Caco-2 (cell line): ENCODE measurements at regions of chr7 and their contacts with region 1.

Region 1: GRCh38 chr7:8295638-8296361 is 33.8 kb upstream of the ICA1 start:
- DNase-seq: peak; percentile 63 to 76
- H3K4me3 ChIP-seq: no peak overlapping the region
- H3K4me3 Mint-ChIP-seq: no peak overlapping the region
- H3K27ac Mint-ChIP-seq: no peak overlapping the region
- H3K4me1 ChIP-seq: peaks cover 11% of the 10 kb centered on the region
- H3K4me1 Mint-ChIP-seq: peaks cover 26% of the 10 kb centered on the region
- H3K27me3 ChIP-seq: no peaks in the 10 kb centered on the region
- H3K27me3 Mint-ChIP-seq: no peaks in the 10 kb centered on the region
- CTCF ChIP-seq: peak; percentile 74

Region 2: GRCh38 chr7:7424151-7424873 is 871.5 kb before region 1 on chr7:
- CTCF ChIA-PET with region 1: no interaction called
- POLR2A ChIA-PET with region 1: no interaction called
- intact Hi-C with region 1: loop called (anchors 2 kb)
- DNase-seq: peak; percentile 62 to 75
- H3K4me3 ChIP-seq: no peak overlapping the region
- H3K4me3 Mint-ChIP-seq: no peak overlapping the region
- H3K27ac Mint-ChIP-seq: no peak overlapping the region
- H3K4me1 ChIP-seq: no peaks in the 10 kb centered on the region
- H3K4me1 Mint-ChIP-seq: no peaks in the 10 kb centered on the region
- H3K27me3 ChIP-seq: no peaks in the 10 kb centered on the region
- H3K27me3 Mint-ChIP-seq: no peaks in the 10 kb centered on the region
- CTCF ChIP-seq: peak; percentile 86 to 93

Region 3: DNA sequence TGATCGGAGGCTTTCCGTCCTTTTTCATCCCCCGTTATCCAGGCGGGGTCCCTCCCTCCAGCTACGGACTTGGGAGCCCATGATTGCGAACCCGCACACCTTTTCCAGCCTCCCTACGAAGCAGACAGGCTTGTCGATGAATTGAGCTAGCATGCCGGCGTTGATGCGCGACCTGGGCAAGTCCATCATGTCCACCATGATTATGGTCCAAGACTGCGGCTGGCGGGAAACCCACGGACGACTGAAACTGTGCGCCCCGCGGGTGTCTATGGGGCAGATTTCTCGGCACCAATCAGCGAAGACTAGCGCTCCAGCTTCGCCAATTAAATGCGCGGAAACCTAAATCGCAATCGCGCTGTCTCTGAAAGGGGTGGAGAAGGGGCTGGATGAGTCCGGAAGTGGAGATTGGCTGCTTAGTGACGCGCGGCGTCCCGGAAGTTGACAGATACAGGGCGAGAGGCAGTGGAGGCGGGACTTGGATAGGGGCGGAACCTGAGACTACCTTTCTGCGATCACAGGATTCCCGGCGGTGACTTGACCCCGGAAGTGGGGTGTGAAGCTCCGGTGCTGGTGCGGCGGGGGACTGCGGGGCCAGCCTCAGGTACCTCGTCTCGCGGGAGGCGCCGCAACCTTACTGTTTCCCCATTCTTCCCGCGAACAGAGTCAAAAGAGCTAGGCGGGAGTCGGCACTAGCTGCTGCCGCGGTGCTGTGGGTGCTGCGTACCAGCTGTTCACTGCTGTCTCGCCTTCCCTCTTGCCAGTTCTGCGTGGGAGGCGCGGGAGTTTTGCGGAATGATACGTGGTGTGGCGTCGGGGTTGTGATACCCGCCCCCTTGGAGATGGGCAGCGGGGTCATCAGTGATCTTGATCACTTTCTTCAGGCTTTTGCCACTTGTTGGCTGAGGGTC is 655.3 kb before region 1 on chr7 and contains the start of gene UMAD1:
- CTCF ChIA-PET with region 1: interaction called, 4 read pairs
- POLR2A ChIA-PET with region 1: interaction called, 3 read pairs
- intact Hi-C with region 1: loop called (anchors 2 kb)
- DNase-seq: peak; percentile 99 to 100
- H3K4me3 ChIP-seq: peak within 1 kb of the TSS; percentile 98
- H3K4me3 Mint-ChIP-seq: peak within 1 kb of the TSS; percentile 88
- H3K27ac Mint-ChIP-seq: peak within 1 kb of the TSS; percentile 97
- H3K4me1 ChIP-seq: peaks cover 15% of the 10 kb centered on the region
- H3K4me1 Mint-ChIP-seq: peaks cover 24% of the 10 kb centered on the region
- H3K27me3 ChIP-seq: no peaks in the 10 kb centered on the region
- H3K27me3 Mint-ChIP-seq: no peaks in the 10 kb centered on the region
- CTCF ChIP-seq: no peak
- total RNA-seq, gene UMAD1: 20.0 and 20.3 TPM in 2 replicates

Region 4: DNA sequence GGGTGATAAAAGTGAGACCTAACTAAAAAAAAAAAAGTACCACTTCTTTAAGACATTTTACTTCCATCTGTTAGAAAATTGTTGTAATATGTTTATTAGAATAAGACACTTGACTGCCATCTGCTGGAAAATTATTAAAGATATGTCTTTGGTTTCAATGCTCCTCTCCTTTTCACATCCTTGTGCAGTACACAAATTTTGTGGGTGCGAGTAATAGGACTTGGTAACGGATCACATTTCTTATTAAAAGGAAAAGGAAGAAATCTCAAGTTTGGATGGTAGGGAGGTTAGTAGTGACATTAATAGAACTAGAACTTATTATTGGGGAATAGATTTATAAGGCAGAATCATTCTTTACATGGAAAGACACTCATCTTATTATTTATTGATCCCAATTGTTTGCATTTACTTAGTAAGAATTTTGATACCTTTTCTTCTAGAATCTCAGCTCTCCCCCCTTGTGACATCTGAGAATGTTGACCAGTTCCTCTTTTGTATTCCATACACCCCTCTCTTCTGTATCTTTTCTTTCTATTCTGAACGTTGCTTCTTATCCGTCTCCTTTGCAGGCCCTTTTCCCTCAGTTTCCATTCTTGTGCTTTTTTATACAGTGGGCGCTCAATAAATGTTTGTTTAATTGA is 534.3 kb before region 1 on chr7:
- CTCF ChIA-PET with region 1: no interaction called
- POLR2A ChIA-PET with region 1: no interaction called
- intact Hi-C with region 1: loop called (anchors 10 kb)
- DNase-seq: peak in 1 of 2 experiments; percentile 10
- H3K4me3 ChIP-seq: no peak overlapping the region
- H3K4me3 Mint-ChIP-seq: no peak overlapping the region
- H3K27ac Mint-ChIP-seq: no peak overlapping the region
- H3K4me1 ChIP-seq: peaks cover 33% of the 10 kb centered on the region
- H3K4me1 Mint-ChIP-seq: peaks cover 32% of the 10 kb centered on the region
- H3K27me3 ChIP-seq: no peaks in the 10 kb centered on the region
- H3K27me3 Mint-ChIP-seq: no peaks in the 10 kb centered on the region
- CTCF ChIP-seq: peak; percentile 6 to 35

Region 5: DNA sequence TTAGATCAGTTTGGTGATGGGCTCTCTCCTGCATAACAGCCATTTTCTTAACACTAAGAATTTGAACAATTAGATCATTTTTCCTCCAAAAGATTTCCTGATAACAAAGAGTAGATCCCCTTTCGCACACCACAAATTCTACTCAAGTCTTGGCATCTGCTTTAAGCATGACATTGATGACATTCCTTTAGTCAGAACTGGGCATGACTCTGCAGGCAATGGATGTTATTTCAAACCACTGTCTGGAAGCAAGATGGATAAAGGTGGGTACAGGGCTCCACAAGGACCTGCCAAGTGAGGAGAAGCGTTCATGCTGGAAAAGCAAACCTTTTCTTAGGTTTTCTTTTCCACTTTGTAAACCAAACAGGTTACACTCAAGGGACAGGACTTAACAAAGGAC is 203.7 kb before region 1 on chr7:
- CTCF ChIA-PET with region 1: no interaction called
- POLR2A ChIA-PET with region 1: no interaction called
- intact Hi-C with region 1: loop called (anchors 5 kb)
- DNase-seq: no peak
- H3K4me3 ChIP-seq: no peak overlapping the region
- H3K4me3 Mint-ChIP-seq: no peak overlapping the region
- H3K27ac Mint-ChIP-seq: no peak overlapping the region
- H3K4me1 ChIP-seq: peaks cover 8% of the 10 kb centered on the region; the same call in 1 of the 2 replicates
- H3K4me1 Mint-ChIP-seq: no peaks in the 10 kb centered on the region
- H3K27me3 ChIP-seq: no peaks in the 10 kb centered on the region
- H3K27me3 Mint-ChIP-seq: no peaks in the 10 kb centered on the region
- CTCF ChIP-seq: no peak

Region 6: DNA sequence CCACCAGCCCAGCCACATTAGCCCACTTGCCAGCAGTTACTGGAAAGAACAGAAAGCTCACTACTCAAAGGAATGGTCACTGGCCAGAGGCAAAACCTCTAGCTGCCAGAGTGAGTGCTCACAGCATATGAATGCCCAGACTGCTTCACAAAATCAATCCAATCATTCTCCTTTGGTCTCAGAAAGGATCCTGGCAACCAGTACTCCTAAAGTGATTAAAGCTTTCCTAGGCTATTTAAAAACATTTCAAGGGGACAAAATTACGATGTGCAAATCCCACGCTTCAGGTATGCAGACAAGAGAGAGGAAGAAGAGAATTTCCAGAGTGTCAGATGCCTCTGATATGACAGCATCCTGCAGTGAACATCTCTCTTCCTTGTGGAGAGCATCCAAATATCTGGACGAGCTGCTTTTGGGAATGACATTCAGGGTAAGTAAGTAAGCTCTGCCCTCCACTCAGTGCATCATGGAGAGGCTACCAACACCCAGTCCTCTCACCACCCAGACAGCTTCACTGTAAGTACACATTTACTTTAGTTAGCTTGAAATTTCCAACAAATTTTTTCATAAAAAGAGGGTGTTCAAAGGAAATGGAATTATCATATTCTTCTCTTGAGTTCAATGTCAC is 58.9 kb before region 1 on chr7:
- CTCF ChIA-PET with region 1: interaction called, 15 read pairs
- POLR2A ChIA-PET with region 1: no interaction called
- intact Hi-C with region 1: loop called (anchors 5 kb)
- DNase-seq: no peak
- H3K4me3 ChIP-seq: no peak overlapping the region
- H3K4me3 Mint-ChIP-seq: no peak overlapping the region
- H3K27ac Mint-ChIP-seq: no peak overlapping the region
- H3K4me1 ChIP-seq: peaks cover 15% of the 10 kb centered on the region
- H3K4me1 Mint-ChIP-seq: peaks cover 29% of the 10 kb centered on the region
- H3K27me3 ChIP-seq: no peaks in the 10 kb centered on the region
- H3K27me3 Mint-ChIP-seq: no peaks in the 10 kb centered on the region
- CTCF ChIP-seq: peak in 1 of 2 experiments; percentile 5

Region 7: GRCh38 chr7:8327199-8327598 is 31.4 kb after region 1 on chr7:
- CTCF ChIA-PET with region 1: no interaction called
- POLR2A ChIA-PET with region 1: no interaction called
- intact Hi-C with region 1: no loop called
- DNase-seq: no peak
- H3K4me3 ChIP-seq: no peak overlapping the region
- H3K4me3 Mint-ChIP-seq: no peak overlapping the region
- H3K27ac Mint-ChIP-seq: no peak overlapping the region
- H3K4me1 ChIP-seq: peaks cover 8% of the 10 kb centered on the region
- H3K4me1 Mint-ChIP-seq: peaks cover 13% of the 10 kb centered on the region
- H3K27me3 ChIP-seq: no peaks in the 10 kb centered on the region
- H3K27me3 Mint-ChIP-seq: no peaks in the 10 kb centered on the region
- CTCF ChIP-seq: no peak

Region 8: DNA sequence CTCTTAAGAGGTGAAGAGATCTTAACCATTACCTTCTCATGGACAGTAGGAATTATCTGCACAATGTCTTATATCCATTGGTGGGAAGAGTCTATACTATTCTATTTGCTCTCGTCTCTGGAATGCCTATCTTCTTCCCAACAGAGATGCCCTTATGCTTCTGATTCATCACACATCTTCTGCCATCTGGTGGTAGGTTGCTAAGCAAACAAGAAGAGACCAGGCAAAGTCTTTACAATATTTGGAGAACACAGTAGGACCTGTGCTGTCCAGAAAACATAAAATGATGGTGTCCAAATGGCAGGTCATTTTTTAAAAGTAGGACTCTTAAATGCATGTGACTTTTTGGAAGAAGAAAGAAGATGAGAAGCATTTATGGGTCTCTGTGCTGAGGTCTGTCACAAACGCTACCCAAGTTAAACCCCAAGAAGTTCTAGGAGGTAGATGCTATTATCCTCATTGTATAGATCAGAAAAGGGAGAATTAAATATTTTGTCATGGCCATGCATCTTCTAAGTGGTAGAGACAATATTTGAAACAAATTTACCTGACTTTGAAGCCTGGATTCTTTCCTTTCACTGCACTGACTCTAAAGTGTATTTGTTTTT is 69.8 kb after region 1 on chr7:
- CTCF ChIA-PET with region 1: no interaction called
- POLR2A ChIA-PET with region 1: no interaction called
- intact Hi-C with region 1: loop called (anchors 1 kb)
- DNase-seq: peak; percentile 35 to 47
- H3K4me3 ChIP-seq: no peak overlapping the region
- H3K4me3 Mint-ChIP-seq: no peak overlapping the region
- H3K27ac Mint-ChIP-seq: no peak overlapping the region
- H3K4me1 ChIP-seq: no peaks in the 10 kb centered on the region
- H3K4me1 Mint-ChIP-seq: peaks cover 15% of the 10 kb centered on the region
- H3K27me3 ChIP-seq: no peaks in the 10 kb centered on the region
- H3K27me3 Mint-ChIP-seq: no peaks in the 10 kb centered on the region
- CTCF ChIP-seq: peak; percentile 50 to 66